ENCODE measurements at regions of chr19 and their contacts with region 1.

Region 1: GRCh38 chr19:45405435-45406225 is 761 bp upstream of the PPP1R13L start:
- DNase-seq: peak; percentile 96
- H3K4me3 Mint-ChIP-seq: peak overlapping the region; percentile 96
- H3K27ac Mint-ChIP-seq: peak overlapping the region; percentile 96
- H3K4me1 Mint-ChIP-seq: peaks cover 25% of the 10 kb centered on the region
- H3K27me3 Mint-ChIP-seq: no peaks in the 10 kb centered on the region
- CTCF ChIP-seq: no peak

Region 2: GRCh38 chr19:45250214-45250831 is 155.3 kb before region 1 on chr19:
- CTCF ChIA-PET with region 1: no interaction called
- POLR2A ChIA-PET with region 1: no interaction called
- intact Hi-C with region 1: no loop called
- DNase-seq: no peak
- H3K4me3 Mint-ChIP-seq: peak overlapping the region; percentile 75
- H3K27ac Mint-ChIP-seq: peak overlapping the region; percentile 36
- H3K4me1 Mint-ChIP-seq: peaks cover 20% of the 10 kb centered on the region
- H3K27me3 Mint-ChIP-seq: peaks cover 1% of the 10 kb centered on the region
- CTCF ChIP-seq: no peak

Region 3: GRCh38 chr19:45311621-45312020 is 94.0 kb before region 1 on chr19:
- CTCF ChIA-PET with region 1: no interaction called
- POLR2A ChIA-PET with region 1: no interaction called
- intact Hi-C with region 1: no loop called
- DNase-seq: no peak
- H3K4me3 Mint-ChIP-seq: no peak overlapping the region
- H3K27ac Mint-ChIP-seq: no peak overlapping the region
- H3K4me1 Mint-ChIP-seq: no peaks in the 10 kb centered on the region
- H3K27me3 Mint-ChIP-seq: peaks cover 26% of the 10 kb centered on the region
- CTCF ChIP-seq: no peak

Region 4: DNA sequence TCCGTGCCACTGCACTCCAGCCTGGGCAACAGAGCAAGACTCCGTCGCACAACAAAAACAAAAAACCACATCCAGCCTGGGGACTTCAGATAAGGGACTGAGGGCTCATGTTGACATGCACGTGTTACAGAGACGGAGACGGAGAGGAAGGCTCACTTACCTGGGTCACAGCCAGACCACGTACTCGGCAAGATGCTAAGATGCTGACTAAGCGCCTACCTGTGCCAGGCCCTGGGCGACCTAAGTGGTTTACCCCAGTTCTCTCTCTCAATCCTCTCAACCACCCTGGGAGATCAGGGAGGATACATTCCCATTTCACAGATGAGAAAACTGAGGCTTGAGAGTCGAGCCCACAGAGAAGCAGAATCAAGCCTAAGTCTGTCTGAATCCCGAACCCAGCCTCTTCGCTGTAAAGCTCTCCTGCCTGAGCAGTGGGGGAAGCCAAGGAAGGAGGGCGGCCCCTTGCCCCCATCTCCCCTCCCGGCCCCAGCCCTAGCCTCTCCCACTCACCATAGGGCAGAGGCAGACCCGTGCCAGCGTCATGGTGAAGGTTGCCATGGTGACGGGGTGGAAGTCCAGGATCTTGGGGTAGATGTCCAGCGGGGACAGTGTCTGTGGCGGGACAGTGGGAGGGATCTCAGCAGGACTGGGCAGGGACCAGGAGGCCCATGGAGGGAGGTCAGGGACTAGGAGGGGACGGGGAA is 48.7 kb before region 1 on chr19:
- CTCF ChIA-PET with region 1: no interaction called
- POLR2A ChIA-PET with region 1: no interaction called
- intact Hi-C with region 1: no loop called
- DNase-seq: no peak
- H3K4me3 Mint-ChIP-seq: no peak overlapping the region
- H3K27ac Mint-ChIP-seq: peak overlapping the region; percentile 59
- H3K4me1 Mint-ChIP-seq: no peaks in the 10 kb centered on the region
- H3K27me3 Mint-ChIP-seq: no peaks in the 10 kb centered on the region
- CTCF ChIP-seq: no peak

Region 5: GRCh38 chr19:45376045-45376724 is 29.4 kb before region 1 on chr19:
- CTCF ChIA-PET with region 1: no interaction called
- POLR2A ChIA-PET with region 1: interaction called, 10 read pairs
- intact Hi-C with region 1: loop called (anchors 2 kb)
- DNase-seq: peak; percentile 87
- H3K4me3 Mint-ChIP-seq: no peak overlapping the region
- H3K27ac Mint-ChIP-seq: no peak overlapping the region
- H3K4me1 Mint-ChIP-seq: peaks cover 5% of the 10 kb centered on the region
- H3K27me3 Mint-ChIP-seq: no peaks in the 10 kb centered on the region
- CTCF ChIP-seq: no peak

Region 6: GRCh38 chr19:45423589-45424190 is 18.1 kb after region 1 on chr19 and contains the start of gene ERCC1:
- CTCF ChIA-PET with region 1: interaction called, 5 read pairs
- POLR2A ChIA-PET with region 1: interaction called, 82 read pairs
- intact Hi-C with region 1: loop called (anchors 1 kb)
- DNase-seq: peak; percentile 100
- H3K4me3 Mint-ChIP-seq: peak within 1 kb of the TSS; percentile 97
- H3K27ac Mint-ChIP-seq: peak within 1 kb of the TSS; percentile 100
- H3K4me1 Mint-ChIP-seq: peaks cover 34% of the 10 kb centered on the region
- H3K27me3 Mint-ChIP-seq: no peaks in the 10 kb centered on the region
- CTCF ChIP-seq: no peak
- total RNA-seq, gene ERCC1: 186 and 227 TPM in 2 replicates

Region 7: DNA sequence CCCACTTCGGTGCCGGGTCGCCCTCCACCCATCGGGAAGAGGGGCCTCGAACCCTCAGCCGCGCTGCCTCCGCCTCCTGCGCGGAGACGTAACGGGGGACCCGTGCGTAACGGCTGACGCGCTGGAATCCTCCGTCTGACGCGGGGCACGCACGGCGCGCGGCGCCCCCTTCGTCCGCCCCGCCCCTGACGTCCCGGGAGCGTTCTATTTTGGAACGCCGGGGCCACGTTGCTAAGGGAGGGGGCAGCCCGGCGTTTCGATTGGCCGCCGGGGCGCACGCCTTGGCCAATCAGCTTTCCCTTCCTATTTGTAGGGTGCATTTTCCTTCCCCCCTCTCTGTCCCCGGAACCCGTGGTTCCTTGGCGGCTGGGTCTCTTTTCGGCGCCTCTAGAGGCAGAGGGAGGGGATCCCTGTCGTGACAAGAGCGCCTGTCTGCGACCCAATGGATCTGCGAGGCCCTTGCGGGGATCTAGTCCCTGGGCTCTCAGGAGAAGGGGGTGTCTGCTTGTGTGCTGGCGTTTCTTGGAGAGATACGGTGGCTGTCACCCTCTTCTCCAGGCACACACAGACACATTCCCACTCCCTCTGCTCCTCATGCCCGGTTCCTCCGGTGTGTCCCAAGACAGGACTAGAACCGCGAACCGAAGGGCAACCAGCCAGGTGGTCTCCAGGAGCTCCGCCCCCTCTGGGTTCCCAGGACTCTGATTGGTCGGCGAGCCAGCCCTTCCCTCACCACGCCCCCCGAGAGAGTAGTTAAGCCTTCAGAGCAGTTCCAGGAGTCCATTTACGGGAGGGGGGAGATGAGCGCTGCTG is 63.7 kb after region 1 on chr19:
- CTCF ChIA-PET with region 1: interaction called, 11 read pairs
- POLR2A ChIA-PET with region 1: interaction called, 44 read pairs
- intact Hi-C with region 1: no loop called
- DNase-seq: peak; percentile 97
- H3K4me3 Mint-ChIP-seq: peak overlapping the region; percentile 82
- H3K27ac Mint-ChIP-seq: peak overlapping the region; percentile 97
- H3K4me1 Mint-ChIP-seq: no peaks in the 10 kb centered on the region
- H3K27me3 Mint-ChIP-seq: no peaks in the 10 kb centered on the region
- CTCF ChIP-seq: no peak

Region 8: GRCh38 chr19:45485305-45486077 is 79.9 kb after region 1 on chr19:
- CTCF ChIA-PET with region 1: interaction called, 11 read pairs
- POLR2A ChIA-PET with region 1: interaction called, 46 read pairs
- intact Hi-C with region 1: no loop called
- DNase-seq: peak; percentile 98
- H3K4me3 Mint-ChIP-seq: peak overlapping the region; percentile 87
- H3K27ac Mint-ChIP-seq: peak overlapping the region; percentile 42
- H3K4me1 Mint-ChIP-seq: peaks cover 5% of the 10 kb centered on the region
- H3K27me3 Mint-ChIP-seq: no peaks in the 10 kb centered on the region
- CTCF ChIP-seq: peak; percentile 76